SK-N-SH (cell line): ENCODE measurements at regions of chr15 and their contacts with region 1.

Region 1: GRCh38 chr15:81410318-81410753 is 36.3 kb upstream of the TMC3 start:
- DNase-seq: peak; percentile 57
- H3K4me3 ChIP-seq: no peak overlapping the region; a peak in 1 of 4 replicates
- H3K27ac ChIP-seq: no peak overlapping the region
- H3K4me1 ChIP-seq: peaks cover 0 to 17% of the 10 kb centered on the region in 2 experiments; a peak in 2 of 4 replicates
- H3K27me3 ChIP-seq: no peaks in the 10 kb centered on the region
- CTCF ChIP-seq: peak; percentile 70
- EP300 ChIP-seq: no peak
- RAD21 ChIP-seq: peak; percentile 91

Region 2: DNA sequence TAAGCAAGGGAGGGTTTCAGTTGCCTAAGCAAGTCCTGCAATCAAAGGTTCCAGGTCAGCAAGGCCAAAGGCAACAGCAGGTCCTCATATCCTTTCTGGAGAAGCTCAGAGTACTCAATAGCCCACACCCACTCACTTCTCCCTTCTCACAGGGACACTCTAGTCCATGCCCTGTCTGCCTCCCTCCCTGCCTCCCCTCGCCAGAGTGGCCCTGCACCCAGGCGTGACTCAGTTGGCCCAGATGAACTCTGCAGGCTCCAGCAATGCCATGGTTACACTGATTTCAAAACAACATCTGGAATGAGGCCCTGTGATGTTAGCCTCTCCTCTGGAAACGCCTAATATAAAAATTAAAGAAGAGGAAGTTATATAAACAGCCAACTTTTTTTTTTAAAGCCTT is 180.8 kb before region 1 on chr15:
- CTCF ChIA-PET with region 1: no interaction called
- POLR2A ChIA-PET with region 1: no interaction called
- DNase-seq: no peak
- H3K4me3 ChIP-seq: no peak overlapping the region
- H3K27ac ChIP-seq: no peak overlapping the region
- H3K4me1 ChIP-seq: no peaks in the 10 kb centered on the region
- H3K27me3 ChIP-seq: no peaks in the 10 kb centered on the region
- CTCF ChIP-seq: no peak
- EP300 ChIP-seq: no peak
- RAD21 ChIP-seq: no peak

Region 3: DNA sequence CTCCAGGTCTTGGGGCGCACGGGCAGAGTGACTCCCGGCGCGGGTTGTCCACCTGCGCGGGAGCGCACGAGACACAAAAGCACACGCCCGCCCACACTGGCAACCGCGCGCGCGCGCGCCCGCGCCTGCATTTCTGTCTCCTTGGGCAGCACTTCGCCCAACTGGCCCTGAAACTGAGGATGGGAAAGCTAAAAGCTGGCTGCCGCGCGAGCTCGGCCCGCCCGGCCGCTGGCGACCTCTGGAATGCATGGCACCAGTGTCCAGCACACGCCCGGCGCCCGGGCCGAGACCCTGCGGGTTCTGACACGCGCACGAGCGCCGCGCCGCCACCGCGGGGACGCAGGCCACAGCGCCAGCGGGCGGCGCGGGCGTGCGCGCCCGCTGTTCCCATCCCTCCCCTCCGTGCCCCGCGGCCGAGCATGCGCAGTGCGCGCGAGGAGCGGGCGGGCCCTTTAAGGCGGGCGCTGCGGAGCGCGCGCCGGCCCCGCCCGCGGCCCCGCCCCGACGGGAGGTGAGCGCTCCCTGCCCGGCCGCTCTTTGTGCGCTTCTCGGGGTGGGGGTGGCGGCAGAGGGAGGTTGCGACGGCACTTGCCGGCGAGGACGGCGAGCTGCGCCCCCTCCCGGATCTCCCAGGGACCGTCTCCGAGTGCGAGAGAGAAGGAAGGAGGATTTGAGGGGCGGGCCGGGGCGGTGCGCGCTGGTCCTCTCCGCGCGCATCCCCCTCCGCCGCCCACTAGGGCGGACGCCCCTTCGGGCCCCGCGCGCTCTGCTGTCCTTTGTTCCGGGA is 636.5 kb after region 1 on chr15:
- CTCF ChIA-PET with region 1: interaction called, 29 read pairs
- POLR2A ChIA-PET with region 1: interaction called, 3 read pairs
- DNase-seq: peak; percentile 97
- H3K4me3 ChIP-seq: peak overlapping the region; percentile 78 to 99
- H3K27ac ChIP-seq: peak overlapping the region; percentile 93 to 99
- H3K4me1 ChIP-seq: peaks cover 6 to 23% of the 10 kb centered on the region in 2 experiments; a peak in 2 of 4 replicates
- H3K27me3 ChIP-seq: no peaks in the 10 kb centered on the region
- CTCF ChIP-seq: peak; percentile 69
- EP300 ChIP-seq: no peak
- RAD21 ChIP-seq: peak; percentile 76